Panc1 (cell line): ENCODE measurements at regions of chr18 and their contacts with region 1.

Region 1: GRCh38 chr18:60090170-60090569 is 190.4 kb downstream of the PMAIP1 start:
- DNase-seq: no peak
- ATAC-seq: no peak
- H3K4me3 ChIP-seq: no peak overlapping the region
- H3K27ac ChIP-seq: no peak overlapping the region
- H3K4me1 ChIP-seq: no peaks in the 10 kb centered on the region
- H3K27me3 ChIP-seq: no peaks in the 10 kb centered on the region
- CTCF ChIP-seq: no peak

Region 2: DNA sequence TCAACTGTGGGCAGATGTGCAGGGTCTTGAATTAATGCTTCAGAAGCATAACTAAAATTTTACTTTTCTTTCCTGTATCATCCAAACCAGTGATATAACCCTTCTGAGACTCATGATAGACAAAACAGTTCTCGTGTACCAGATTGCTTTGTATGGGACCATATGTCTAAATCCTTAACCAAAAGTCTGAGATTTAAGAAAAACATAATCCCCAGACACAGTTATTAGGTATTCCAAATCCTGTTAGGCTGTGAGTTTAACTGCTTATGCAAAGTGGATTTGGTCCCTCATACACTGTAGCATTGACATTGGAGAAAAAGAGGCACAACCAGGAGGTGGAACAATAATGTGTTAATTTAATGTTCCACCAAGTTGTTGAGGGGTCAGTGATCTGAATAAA is 44.6 kb after region 1 on chr18:
- CTCF ChIA-PET with region 1: no interaction called
- POLR2A ChIA-PET with region 1: no interaction called
- in situ Hi-C with region 1: no loop called
- intact Hi-C with region 1: loop called (anchors 2 kb)
- DNase-seq: no peak
- ATAC-seq: no peak
- H3K4me3 ChIP-seq: no peak overlapping the region
- H3K27ac ChIP-seq: no peak overlapping the region
- H3K4me1 ChIP-seq: no peaks in the 10 kb centered on the region
- H3K27me3 ChIP-seq: no peaks in the 10 kb centered on the region
- CTCF ChIP-seq: no peak

Region 3: GRCh38 chr18:60493066-60493465 is 402.9 kb after region 1 on chr18:
- CTCF ChIA-PET with region 1: no interaction called
- POLR2A ChIA-PET with region 1: no interaction called
- in situ Hi-C with region 1: no loop called
- intact Hi-C with region 1: no loop called
- DNase-seq: no peak
- ATAC-seq: no peak
- H3K4me3 ChIP-seq: no peak overlapping the region
- H3K27ac ChIP-seq: no peak overlapping the region
- H3K4me1 ChIP-seq: no peaks in the 10 kb centered on the region
- H3K27me3 ChIP-seq: no peaks in the 10 kb centered on the region
- CTCF ChIP-seq: no peak